ENCODE measurements at regions of chr11 and their contacts with region 1.

Region 1: GRCh38 chr11:19199771-19200170 is 2.0 kb downstream of the CSRP3 start:
- DNase-seq: no peak
- ATAC-seq: no peak

Region 2: GRCh38 chr11:18994860-18995259 is 204.9 kb before region 1 on chr11:
- intact Hi-C with region 1: no loop called
- DNase-seq: no peak
- ATAC-seq: no peak

Region 3: DNA sequence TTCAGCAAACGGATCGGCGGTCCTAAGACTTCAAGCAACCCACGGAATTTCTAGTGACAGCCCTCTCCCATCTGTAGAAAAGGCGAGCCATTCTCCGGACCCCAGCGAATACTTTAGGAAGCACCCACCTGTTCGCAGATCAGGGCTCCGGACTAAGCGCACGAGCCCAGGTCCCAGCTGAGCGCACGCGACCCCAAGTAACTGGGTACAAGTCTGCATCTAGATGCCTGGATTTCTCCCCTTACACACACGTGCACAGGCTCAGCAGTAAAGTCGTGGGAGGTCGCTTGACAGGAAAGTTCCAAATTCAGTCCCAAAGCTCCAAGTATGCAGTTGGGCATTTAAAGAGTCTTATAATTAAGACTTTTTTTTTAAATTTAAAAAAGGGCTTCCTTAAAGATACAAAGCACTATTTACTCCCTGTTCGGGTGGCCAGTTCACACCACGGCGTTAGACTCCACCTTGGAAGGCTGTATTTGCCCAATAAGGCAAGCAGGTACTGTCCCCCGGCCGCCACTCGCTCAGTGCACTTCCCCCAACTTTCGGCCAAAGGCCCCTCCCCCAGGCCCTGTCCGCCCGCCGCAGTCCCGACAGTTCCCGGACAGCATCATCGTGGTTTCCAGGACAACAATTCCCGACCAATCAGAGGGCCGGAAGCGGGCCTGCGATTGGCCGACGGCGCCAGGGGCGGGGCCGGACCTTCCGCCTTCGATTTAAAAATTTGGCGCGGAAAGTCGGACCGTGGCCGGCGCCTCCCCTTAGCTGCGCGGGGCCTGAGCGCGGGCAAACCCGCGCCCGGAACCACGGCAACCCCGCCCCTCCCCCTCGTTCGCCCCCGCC is 40.9 kb after region 1 on chr11 and contains the start of gene E2F8:
- intact Hi-C with region 1: loop called (anchors 5 kb)
- DNase-seq: peak; percentile 94
- ATAC-seq: peak; percentile 97
- total RNA-seq, gene E2F8: 1.7 TPM

Region 4: GRCh38 chr11:19441752-19442553 is 242.2 kb after region 1 on chr11:
- intact Hi-C with region 1: loop called (anchors 10 kb)
- DNase-seq: no peak
- ATAC-seq: peak; percentile 71

Region 5: DNA sequence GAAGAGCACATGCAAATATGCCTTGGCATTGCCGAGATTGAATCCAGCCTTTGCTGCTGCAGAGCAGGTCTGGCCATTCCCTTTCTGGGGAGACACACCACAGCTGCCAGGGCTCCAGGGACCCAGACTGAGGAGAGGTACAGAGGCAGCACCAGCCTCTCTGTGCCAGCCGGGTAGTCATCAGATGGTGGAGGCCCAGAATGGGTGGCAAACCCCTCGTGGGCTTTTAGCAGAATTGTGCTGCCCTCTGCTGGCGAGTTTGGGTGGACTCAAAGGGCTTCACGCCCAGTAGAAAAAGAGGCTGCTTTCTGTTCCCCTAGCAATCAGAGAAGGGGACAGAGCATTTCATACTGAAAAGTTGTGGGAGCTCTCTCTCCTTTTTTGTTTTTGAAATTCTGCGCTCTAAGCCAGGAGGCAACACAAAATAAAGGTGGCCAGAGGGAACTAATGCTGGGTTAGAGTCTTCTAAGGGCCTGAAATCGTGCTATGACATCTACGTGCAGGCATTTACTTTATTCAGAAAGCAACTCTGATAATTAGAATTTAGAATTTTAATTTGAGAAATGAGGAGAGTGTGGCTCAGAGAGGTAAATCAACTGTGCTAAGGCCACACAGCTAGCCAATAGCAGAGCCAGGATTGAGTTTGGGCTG is 354.0 kb after region 1 on chr11:
- intact Hi-C with region 1: no loop called
- DNase-seq: no peak
- ATAC-seq: peak; percentile 75

Region 6: DNA sequence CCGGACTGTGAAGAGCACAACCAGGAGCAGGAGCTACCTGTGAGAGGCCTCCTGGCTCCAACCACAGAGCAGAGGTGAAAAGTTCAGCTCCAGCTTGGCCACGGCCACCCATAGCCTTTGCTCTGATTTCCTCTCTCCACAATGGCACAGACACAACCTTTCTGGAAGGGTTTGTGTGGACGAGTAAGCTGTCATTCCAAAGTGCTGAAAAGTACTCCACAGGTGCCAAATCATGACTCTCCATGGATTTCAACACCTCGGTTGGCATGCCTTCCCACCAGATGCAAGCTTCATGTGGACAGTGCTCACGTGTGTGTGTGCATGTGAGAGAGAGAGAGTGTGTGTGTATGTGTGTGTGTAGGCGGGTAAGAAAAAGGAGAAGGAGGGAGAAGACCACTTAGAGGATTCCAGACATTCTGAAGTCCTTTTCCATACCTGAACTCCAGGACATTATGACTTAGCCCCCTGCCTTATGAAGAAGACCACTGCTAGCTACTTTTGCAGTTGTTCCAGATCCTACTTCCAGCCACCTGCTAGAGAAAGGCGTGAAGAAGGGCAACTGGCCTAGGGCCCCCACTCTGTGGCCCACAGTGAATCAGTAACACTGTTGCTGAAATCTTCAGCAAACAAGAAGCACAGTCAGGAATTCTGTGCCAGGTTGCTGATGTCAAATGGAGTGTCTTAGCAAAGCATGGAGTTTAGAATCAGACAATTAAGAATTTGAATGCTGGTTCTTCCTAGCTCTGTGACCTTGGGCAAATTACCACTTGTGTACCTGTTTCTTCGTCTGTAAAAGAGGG is 498.9 kb after region 1 on chr11:
- intact Hi-C with region 1: loop called (anchors 5 kb)
- DNase-seq: no peak
- ATAC-seq: peak; percentile 91

Measured in Right ventricle myocardium inferior (tissue), 1 donor.